B cell (primary cell): ENCODE measurements at regions of chr11 and their contacts with region 1.

Region 1: DNA sequence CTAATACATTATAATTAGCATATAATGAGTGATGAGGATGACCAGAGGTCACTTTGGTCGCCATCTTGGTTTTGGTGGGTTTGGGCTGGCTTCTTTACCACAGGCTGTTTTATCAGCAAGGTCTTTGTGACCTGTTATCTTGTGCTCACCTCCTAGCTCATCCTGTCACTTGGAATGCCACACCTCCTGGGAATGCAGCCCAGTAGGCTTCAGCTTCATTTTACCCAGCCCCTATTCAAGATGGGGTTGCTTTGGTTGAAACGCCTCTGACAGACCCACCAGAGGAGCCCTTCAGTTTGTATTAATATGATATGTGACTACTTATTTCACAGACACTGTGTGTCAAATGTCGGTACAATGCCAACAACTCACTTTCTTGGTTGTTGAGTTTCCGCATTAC is 20.2 kb downstream of the FOLR3 start:
- DNase-seq: no peak
- ATAC-seq: no peak
- H3K4me3 ChIP-seq: no peak overlapping the region
- H3K4me3 Mint-ChIP-seq: no peak overlapping the region
- H3K27ac ChIP-seq: no peak overlapping the region
- H3K27ac Mint-ChIP-seq: no peak overlapping the region
- H3K4me1 ChIP-seq: no peaks in the 10 kb centered on the region
- H3K4me1 Mint-ChIP-seq: no peaks in the 10 kb centered on the region
- H3K27me3 ChIP-seq: peaks cover 0 to 3% (median 1%) of the 10 kb centered on the region in 4 experiments
- H3K27me3 Mint-ChIP-seq: peaks cover 13% of the 10 kb centered on the region
- CTCF ChIP-seq: no peak

Region 2: GRCh38 chr11:72141066-72141465 is 14.7 kb before region 1 on chr11:
- CTCF ChIA-PET with region 1: interaction called, 24 read pairs
- POLR2A ChIA-PET with region 1: no interaction called
- intact Hi-C with region 1: no loop called
- DNase-seq: no peak
- ATAC-seq: no peak
- H3K4me3 ChIP-seq: no peak overlapping the region
- H3K4me3 Mint-ChIP-seq: no peak overlapping the region
- H3K27ac ChIP-seq: no peak overlapping the region
- H3K27ac Mint-ChIP-seq: no peak overlapping the region
- H3K4me1 ChIP-seq: no peaks in the 10 kb centered on the region
- H3K4me1 Mint-ChIP-seq: no peaks in the 10 kb centered on the region
- H3K27me3 ChIP-seq: peaks cover 0 to 3% (median 0%) of the 10 kb centered on the region in 4 experiments
- H3K27me3 Mint-ChIP-seq: peaks cover 19% of the 10 kb centered on the region
- CTCF ChIP-seq: no peak